Activated CD8-positive, alpha-beta T cell treated with anti-CD3 and anti-CD28 coated beads for 36 hours (primary cell): ENCODE measurements at regions of chr16 and their contacts with region 1.

Region 1: DNA sequence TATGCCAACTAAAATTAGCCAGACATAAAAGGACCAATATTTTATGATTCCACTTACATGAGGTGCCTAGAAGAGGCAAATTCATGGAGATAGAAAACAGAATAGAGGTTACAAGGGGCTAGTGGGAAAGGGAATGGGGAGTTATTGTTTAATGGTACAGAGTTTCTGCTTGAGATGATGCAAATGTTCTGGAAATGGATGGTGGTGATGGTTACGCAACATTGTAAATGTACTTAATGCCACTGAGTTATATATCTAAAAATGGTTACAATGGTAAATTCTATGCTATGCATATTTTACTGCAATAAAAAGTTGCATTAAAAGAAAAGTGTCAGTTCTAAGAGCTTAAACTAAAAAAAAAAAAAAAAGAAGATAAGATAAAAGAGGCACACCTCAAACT is 17.9 kb downstream of the MT1X start:
- DNase-seq: no peak
- ATAC-seq: no peak
- H3K4me3 Mint-ChIP-seq: no peak overlapping the region
- H3K27ac Mint-ChIP-seq: no peak overlapping the region
- H3K4me1 Mint-ChIP-seq: peaks cover 12% of the 10 kb centered on the region
- H3K27me3 Mint-ChIP-seq: no peaks in the 10 kb centered on the region
- CTCF ChIP-seq: no peak

Region 2: GRCh38 chr16:56513972-56514371 is 186.2 kb before region 1 on chr16:
- CTCF ChIA-PET with region 1: interaction called, 16 read pairs
- POLR2A ChIA-PET with region 1: no interaction called
- intact Hi-C with region 1: no loop called
- DNase-seq: peak; percentile 72
- ATAC-seq: peak; percentile 88
- H3K4me3 Mint-ChIP-seq: no peak overlapping the region
- H3K27ac Mint-ChIP-seq: no peak overlapping the region
- H3K4me1 Mint-ChIP-seq: peaks cover 42% of the 10 kb centered on the region
- H3K27me3 Mint-ChIP-seq: no peaks in the 10 kb centered on the region
- CTCF ChIP-seq: peak; percentile 65

Region 3: GRCh38 chr16:56589141-56590039 is 110.8 kb before region 1 on chr16 and contains the start of gene MT3:
- CTCF ChIA-PET with region 1: interaction called, 13 read pairs
- POLR2A ChIA-PET with region 1: interaction called, 5 read pairs
- intact Hi-C with region 1: no loop called
- DNase-seq: peak; percentile 68
- ATAC-seq: peak; percentile 89
- H3K4me3 Mint-ChIP-seq: peak within 1 kb of the TSS; percentile 78
- H3K27ac Mint-ChIP-seq: peak within 1 kb of the TSS; percentile 2
- H3K4me1 Mint-ChIP-seq: peaks cover 9% of the 10 kb centered on the region
- H3K27me3 Mint-ChIP-seq: peaks cover 12% of the 10 kb centered on the region
- CTCF ChIP-seq: no peak
- total RNA-seq, gene MT3: 30.7 to 33.6 TPM

Region 4: GRCh38 chr16:56643080-56643778 is 57.0 kb before region 1 on chr16:
- CTCF ChIA-PET with region 1: interaction called, 27 read pairs
- POLR2A ChIA-PET with region 1: no interaction called
- intact Hi-C with region 1: no loop called
- DNase-seq: peak; percentile 91
- ATAC-seq: peak; percentile 100
- H3K4me3 Mint-ChIP-seq: peak overlapping the region; percentile 60
- H3K27ac Mint-ChIP-seq: no peak overlapping the region
- H3K4me1 Mint-ChIP-seq: peaks cover 17% of the 10 kb centered on the region
- H3K27me3 Mint-ChIP-seq: peaks cover 38% of the 10 kb centered on the region
- CTCF ChIP-seq: peak; percentile 49

Region 5: DNA sequence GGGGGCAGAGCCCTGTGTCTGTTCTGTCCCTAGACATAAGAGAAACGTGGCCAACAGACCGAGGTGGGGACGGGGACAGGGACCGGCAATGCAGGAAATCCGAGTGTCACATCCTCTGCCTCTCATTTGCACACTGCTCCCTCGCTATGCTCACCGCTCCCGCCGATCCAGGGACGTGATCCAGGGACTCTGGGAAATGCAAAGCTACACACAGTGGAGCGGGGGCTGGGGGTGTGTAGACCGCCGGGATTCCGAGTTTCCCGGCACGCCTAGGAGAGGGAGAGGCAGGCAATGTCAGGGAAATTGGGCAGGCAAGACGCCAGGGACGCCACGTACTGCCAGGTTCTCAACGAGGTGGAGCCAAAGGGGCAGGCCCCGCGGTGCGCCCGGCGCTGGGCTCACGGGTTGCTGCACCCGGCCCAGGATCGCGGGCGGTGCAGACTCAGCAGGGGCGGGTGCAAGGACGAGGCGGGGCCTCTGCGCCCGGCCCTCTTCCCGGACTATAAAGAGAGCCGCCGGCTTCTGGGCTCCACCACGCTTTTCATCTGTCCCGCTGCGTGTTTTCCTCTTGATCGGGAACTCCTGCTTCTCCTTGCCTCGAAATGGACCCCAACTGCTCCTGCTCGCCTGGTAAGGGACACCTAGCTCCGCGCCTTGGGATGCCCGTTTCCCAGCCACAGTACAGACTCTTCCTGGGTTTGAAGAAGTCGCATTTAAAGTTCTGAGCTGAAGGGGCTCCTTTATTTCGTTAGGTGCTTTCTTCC is 18.1 kb before region 1 on chr16 and contains the start of gene MT1X:
- CTCF ChIA-PET with region 1: interaction called, 20 read pairs
- POLR2A ChIA-PET with region 1: interaction called, 4 read pairs
- intact Hi-C with region 1: no loop called
- DNase-seq: peak; percentile 95
- ATAC-seq: peak; percentile 97
- H3K4me3 Mint-ChIP-seq: peak within 1 kb of the TSS; percentile 86
- H3K27ac Mint-ChIP-seq: peak within 1 kb of the TSS; percentile 97
- H3K4me1 Mint-ChIP-seq: peaks cover 21% of the 10 kb centered on the region
- H3K27me3 Mint-ChIP-seq: no peaks in the 10 kb centered on the region
- CTCF ChIP-seq: no peak
- total RNA-seq, gene MT1X: 52.5 to 54.2 TPM

Region 6: DNA sequence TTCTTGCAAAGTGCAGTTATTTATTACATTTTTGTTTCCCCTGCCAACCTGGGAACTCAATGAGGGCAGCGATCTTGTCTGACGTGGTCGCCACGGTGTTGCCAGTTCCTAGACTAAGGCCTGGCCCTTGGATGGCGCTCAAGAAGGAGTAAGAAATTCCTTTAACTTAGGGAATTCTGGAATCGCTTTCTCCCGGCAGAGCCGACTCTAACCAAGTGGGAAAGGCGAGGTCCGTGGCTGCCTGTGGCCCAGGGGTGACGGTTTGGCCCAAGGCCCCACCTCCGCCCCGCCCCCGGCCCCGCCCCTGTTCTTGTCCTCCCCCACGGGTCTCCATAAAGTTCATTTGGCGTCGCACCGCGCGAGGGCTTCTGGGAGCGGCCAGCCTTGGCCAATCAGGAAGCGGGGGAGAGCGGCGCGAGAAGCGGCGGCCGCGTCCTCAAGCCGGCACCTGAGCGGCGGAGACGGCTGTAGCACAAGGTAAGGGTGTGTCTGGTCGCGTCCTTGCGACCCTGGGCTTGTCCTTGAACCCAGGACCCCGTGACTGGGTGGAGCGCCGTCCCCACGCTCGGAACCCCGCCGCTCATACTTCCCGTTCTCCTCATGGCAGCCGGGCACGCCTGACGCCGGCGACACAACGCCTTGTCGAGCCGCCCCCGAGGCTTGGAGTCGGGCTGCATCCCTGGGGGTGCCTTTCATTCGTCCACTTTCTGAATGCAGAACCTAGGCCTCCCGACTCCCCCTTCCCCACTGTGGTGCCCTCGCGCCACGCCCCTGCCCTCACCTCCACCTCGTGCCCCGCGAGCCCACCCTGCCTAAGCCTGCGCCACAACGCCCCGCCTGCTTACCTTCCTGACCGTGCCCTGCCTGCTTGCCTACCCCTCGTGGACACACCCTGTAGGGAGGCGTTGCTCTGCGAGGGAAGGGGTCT is 29.8 kb after region 1 on chr16 and contains the start of gene NUP93:
- CTCF ChIA-PET with region 1: interaction called, 15 read pairs
- POLR2A ChIA-PET with region 1: no interaction called
- intact Hi-C with region 1: no loop called
- DNase-seq: peak; percentile 94
- ATAC-seq: peak; percentile 89
- H3K4me3 Mint-ChIP-seq: no peak within 1 kb of the TSS
- H3K27ac Mint-ChIP-seq: peak within 1 kb of the TSS; percentile 80
- H3K4me1 Mint-ChIP-seq: peaks cover 13% of the 10 kb centered on the region
- H3K27me3 Mint-ChIP-seq: no peaks in the 10 kb centered on the region
- CTCF ChIP-seq: no peak
- total RNA-seq, gene NUP93: 171 to 191 TPM